Astrocyte of the cerebellum (primary cell): ENCODE measurements at regions of chr1 and their contacts with region 1.

Region 1: GRCh38 chr1:42551180-42551579 is 88.1 kb downstream of the CCDC30 start:
- DNase-seq: no peak
- H3K4me3 ChIP-seq: no peak overlapping the region
- CTCF ChIP-seq: no peak

Region 2: DNA sequence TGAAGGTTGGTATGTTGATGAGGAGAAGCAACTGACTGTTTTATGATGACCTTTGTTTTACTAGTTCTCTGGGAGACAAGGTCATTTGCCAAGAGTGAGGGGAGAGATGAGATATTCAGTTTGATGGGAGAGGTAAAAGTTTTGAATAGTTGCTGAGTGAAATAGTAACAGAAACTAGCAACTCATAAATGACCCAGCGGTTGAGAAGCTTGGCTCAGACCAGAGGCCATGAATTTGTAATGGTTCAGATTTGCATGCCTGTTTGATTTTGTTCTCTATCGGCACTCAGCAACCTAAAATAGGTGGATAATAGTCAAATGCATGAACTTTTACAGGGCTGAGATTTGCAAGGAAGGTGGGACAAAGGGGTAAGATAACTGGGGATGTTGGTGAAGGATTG is 81.5 kb before region 1 on chr1:
- in situ Hi-C with region 1: loop called (anchors 5 kb)
- DNase-seq: no peak
- H3K4me3 ChIP-seq: no peak overlapping the region
- CTCF ChIP-seq: no peak

Region 3: DNA sequence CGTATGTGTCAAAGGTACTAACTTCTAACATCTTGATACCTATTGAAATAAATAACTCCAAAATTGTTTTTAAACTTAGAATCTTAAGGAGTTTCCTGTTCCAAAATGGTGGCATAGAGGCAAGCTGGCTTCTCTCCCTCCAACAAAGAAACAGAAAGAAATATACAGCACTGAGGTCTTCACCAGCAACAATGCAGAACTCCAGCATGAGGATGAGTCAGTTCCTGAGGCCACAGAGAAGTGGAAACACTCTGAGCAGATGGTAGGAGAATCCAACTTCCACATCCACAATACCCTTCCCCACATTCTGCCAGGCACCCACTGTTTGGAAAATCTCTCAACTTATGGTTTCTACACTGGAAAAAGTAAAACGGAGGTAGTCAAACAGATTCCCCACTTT is 94.9 kb after region 1 on chr1:
- in situ Hi-C with region 1: no loop called
- DNase-seq: no peak
- H3K4me3 ChIP-seq: no peak overlapping the region
- CTCF ChIP-seq: no peak